Left cardiac atrium (tissue), 4 donors: ENCODE measurements at regions of chr12 and their contacts with region 1.

Region 1: GRCh38 chr12:104467346-104467837 is 10.6 kb downstream of the CHST11 start:
- DNase-seq: no peak
- ATAC-seq: no peak

Region 2: DNA sequence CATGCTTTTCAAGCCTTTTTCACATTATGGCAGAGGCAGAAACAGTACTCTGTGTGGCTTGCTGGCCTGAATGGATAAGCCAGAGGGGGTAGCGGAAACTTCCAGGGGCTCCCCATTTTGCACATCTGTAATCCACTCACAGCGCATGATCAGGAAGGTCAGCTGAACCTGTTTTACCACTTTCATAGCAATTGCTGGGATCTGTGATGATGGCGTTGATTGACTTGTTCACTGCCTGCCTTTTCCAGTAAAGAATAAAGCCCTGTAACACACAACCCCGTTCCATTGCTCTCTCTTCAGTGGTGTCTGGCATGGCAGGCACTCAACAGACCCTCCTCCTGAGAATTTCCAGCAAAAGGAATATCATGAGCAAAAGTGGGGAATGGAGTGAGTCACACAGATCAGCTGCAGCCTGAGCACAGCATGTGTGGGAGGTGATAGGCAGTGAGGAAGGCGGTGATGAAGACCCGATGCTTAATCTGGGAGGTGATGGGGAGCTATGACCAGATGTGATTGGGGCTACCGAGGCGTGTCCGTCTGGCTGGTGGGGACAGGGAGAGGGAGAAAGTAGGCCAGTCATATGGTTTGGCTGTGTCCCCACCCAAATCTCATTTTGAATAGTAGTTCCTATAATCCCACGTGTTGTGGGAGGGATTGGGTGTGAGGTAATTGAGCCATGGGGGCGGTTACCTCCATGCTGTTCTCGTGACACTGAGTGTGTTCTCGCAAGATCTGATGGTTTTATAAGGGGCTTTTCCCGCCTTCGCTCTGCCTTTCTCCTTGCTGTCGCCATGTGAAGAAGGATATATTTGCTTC is 55.4 kb before region 1 on chr12:
- intact Hi-C with region 1: no loop called
- DNase-seq: no peak
- ATAC-seq: no peak

Region 3: DNA sequence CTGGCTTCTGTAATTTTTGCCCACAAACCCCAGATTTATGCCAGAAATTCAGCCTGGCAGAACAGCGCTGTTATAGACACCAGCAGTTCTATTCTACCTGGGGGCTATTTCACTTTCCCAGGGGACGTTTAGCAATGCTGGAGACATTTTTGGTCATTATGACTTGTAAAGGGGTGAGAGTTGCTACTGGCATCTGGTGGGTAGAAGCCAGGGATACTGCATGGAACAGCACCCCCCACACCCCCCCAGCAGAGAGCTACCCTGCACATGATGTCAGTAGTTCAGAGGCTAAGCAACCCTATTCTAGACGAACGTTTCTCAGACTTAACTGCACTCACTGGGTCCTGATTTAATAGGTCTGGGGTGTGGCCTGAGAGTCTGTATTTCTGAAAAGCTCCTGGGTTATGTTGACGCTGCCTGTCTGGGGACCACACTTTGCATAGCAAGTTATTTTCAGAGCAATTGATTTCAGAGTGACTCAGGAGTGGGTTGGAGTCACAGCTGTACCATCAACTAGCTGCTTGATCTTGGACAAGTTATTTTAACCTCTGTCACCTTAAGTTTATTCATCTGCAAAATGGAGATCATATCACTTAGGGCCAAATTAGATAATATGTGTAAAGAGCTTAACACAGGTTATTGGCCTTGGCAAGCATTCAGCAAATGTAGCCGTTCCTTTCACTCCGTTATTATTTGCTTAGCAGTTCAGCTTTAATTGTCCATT is 37.9 kb after region 1 on chr12:
- intact Hi-C with region 1: loop called in 1 of 2 experiments (anchors 5 kb)
- DNase-seq: no peak
- ATAC-seq: no peak